ENCODE measurements at regions of chr9 and their contacts with region 1.

Region 1: GRCh38 chr9:136533775-136534157 is 12.1 kb downstream of the NOTCH1 start:
- DNase-seq: peak; percentile 84
- ATAC-seq: peak; percentile 70
- H3K4me3 Mint-ChIP-seq: peak overlapping the region; percentile 69
- H3K27ac Mint-ChIP-seq: peak overlapping the region; percentile 92
- H3K4me1 Mint-ChIP-seq: peaks cover 79% of the 10 kb centered on the region
- H3K27me3 Mint-ChIP-seq: no peaks in the 10 kb centered on the region

Region 2: GRCh38 chr9:136386018-136386417 is 147.7 kb before region 1 on chr9:
- CTCF ChIA-PET with region 1: no interaction called
- POLR2A ChIA-PET with region 1: no interaction called
- DNase-seq: no peak
- ATAC-seq: no peak
- H3K4me3 Mint-ChIP-seq: no peak overlapping the region
- H3K27ac Mint-ChIP-seq: no peak overlapping the region
- H3K4me1 Mint-ChIP-seq: peaks cover 27% of the 10 kb centered on the region
- H3K27me3 Mint-ChIP-seq: no peaks in the 10 kb centered on the region

Region 3: GRCh38 chr9:136545966-136546698 is 12.4 kb after region 1 on chr9 and contains the start of gene NOTCH1:
- CTCF ChIA-PET with region 1: interaction called, 8 read pairs
- POLR2A ChIA-PET with region 1: interaction called, 16 read pairs
- DNase-seq: peak; percentile 91
- ATAC-seq: peak; percentile 78
- H3K4me3 Mint-ChIP-seq: peak within 1 kb of the TSS; percentile 92
- H3K27ac Mint-ChIP-seq: peak within 1 kb of the TSS; percentile 88
- H3K4me1 Mint-ChIP-seq: peaks cover 47% of the 10 kb centered on the region
- H3K27me3 Mint-ChIP-seq: no peaks in the 10 kb centered on the region
- total RNA-seq, gene NOTCH1: 86.6 to 94.1 TPM

Region 4: GRCh38 chr9:136587145-136587943 is 53.6 kb after region 1 on chr9:
- CTCF ChIA-PET with region 1: no interaction called
- POLR2A ChIA-PET with region 1: no interaction called
- DNase-seq: no peak
- ATAC-seq: no peak
- H3K4me3 Mint-ChIP-seq: no peak overlapping the region
- H3K27ac Mint-ChIP-seq: no peak overlapping the region
- H3K4me1 Mint-ChIP-seq: peaks cover 18% of the 10 kb centered on the region
- H3K27me3 Mint-ChIP-seq: no peaks in the 10 kb centered on the region

Measured in activated CD8-positive, alpha-beta T cell treated with anti-CD3 and anti-CD28 coated beads, Interleukin-2, amount 10 ng/mL, durations not matched to agents 7 days and 5 days (primary cell).